Dorsolateral prefrontal cortex (tissue), 120 donors: ENCODE measurements at regions of chr1 and their contacts with region 1.

Region 1: DNA sequence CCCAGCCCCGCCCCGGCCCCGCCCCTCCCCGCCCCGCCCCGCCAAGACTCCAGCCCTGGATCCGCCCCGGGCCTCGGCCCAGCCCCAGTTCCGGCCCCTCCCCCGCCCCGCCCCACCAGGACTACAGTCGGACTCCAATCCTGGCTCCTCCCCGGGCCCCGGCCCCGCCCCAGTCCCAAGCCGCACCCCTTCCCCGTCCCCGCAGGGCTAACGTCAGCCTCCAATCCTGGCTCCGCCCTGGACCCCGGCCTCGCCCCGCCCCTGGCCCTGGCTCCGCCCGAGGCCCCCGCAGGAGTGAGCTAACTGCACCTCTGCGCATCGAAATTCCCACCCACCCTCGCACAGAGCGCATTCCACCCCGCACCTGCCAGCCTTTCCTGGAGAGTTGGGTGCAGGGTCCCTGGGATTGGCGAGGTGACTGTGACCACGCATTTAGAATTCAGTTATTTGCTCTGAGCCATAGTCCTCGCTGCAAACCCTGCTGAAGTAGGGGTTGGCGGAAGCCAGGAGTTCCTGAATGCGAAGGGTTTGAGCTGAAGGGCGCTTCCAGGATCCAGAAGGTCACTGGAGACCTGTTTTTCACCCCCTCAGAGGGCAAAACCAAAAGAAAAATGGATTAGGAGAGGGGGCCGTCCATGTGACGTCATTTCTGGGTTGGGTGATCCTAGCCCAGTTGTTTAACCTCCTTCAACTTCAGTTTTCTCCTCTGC is 588 bp upstream of the IGSF8 start:
- DNase-seq: peak; percentile 96 to 100 (median 98)
- H3K4me3 ChIP-seq: peak overlapping the region; percentile 26 to 97 (median 88)
- H3K27ac ChIP-seq: peak overlapping the region; percentile 86 to 100 (median 99)
- H3K27me3 ChIP-seq: no peaks in the 10 kb centered on the region
- CTCF ChIP-seq: peak in 1 of 56 donors; percentile 9

Region 2: GRCh38 chr1:159960721-159961381 is 138.2 kb before region 1 on chr1:
- intact Hi-C with region 1: no loop called
- DNase-seq: no peak
- H3K4me3 ChIP-seq: no peak overlapping the region
- H3K27ac ChIP-seq: no peak overlapping the region
- H3K27me3 ChIP-seq: peaks cover 0 to 4% (median 0%) of the 10 kb centered on the region in 45 donors
- CTCF ChIP-seq: no peak

Region 3: GRCh38 chr1:160046494-160047110 is 52.4 kb before region 1 on chr1:
- intact Hi-C with region 1: loop called in 1 of 2 experiments (anchors 5 kb)
- DNase-seq: peak; percentile 54 to 96 (median 89)
- H3K4me3 ChIP-seq: peak overlapping the region in 25 of 59 donors; percentile 5 to 42 (median 22)
- H3K27ac ChIP-seq: peak overlapping the region; percentile 8 to 100 (median 90)
- H3K27me3 ChIP-seq: no peaks in the 10 kb centered on the region
- CTCF ChIP-seq: peak; percentile 64 to 95 (median 80)

Region 4: GRCh38 chr1:160161965-160162705 is 63.1 kb after region 1 on chr1:
- intact Hi-C with region 1: loop called in 1 of 2 experiments (anchors 5 kb)
- DNase-seq: peak in 3 of 10 donors; percentile 47 to 61 (median 51)
- H3K4me3 ChIP-seq: no peak overlapping the region
- H3K27ac ChIP-seq: peak overlapping the region in 8 of 59 donors; percentile 7 to 46 (median 28)
- H3K27me3 ChIP-seq: no peaks in the 10 kb centered on the region
- CTCF ChIP-seq: peak in 54 of 56 donors; percentile 13 to 78 (median 52)

Region 5: DNA sequence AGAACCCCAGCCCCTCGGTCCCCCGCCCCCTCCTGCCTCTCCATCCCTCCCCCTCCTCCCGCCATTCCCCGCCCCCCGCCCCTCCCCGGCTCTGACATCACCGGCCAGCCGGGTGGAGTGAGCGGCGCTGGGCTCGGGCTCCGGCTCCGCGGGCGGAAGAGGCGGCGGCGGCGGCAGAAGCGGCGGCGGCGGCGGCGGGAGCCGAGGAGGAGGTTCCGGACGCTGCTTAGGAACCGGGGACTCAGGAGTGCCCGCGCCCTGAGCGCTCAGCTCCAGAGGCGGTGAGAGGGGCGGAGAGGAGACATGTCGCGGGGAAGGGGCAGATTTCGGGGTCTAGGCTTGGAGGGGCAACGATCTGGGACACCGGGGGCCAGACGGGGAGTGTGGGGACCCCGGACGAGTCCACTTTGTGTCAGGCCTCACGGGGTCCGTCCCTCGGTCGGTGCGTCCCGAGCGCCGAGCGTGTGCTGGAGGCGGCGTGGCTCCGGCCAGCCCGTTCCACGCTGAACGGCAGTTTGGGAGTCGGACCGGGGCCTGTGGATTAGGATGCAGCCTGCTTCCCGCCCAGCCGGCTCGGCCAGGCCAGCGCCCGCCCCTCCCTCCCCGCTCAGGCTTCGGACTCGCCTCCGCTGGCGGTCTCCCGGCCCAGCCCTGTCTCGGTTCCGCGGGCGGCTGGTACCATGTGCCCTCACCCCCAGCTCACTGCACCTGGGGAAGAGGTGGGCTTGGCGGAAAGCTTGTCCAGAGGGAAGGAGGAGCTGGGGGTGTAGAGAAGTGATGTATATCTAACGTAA is 106.4 kb after region 1 on chr1 and contains the start of gene PEA15:
- intact Hi-C with region 1: loop called (anchors 1 to 5 kb)
- DNase-seq: peak; percentile 55 to 90 (median 76)
- H3K4me3 ChIP-seq: peak within 1 kb of the TSS; percentile 62 to 99 (median 93)
- H3K27ac ChIP-seq: peak within 1 kb of the TSS; percentile 65 to 99 (median 95)
- H3K27me3 ChIP-seq: no peaks in the 10 kb centered on the region
- CTCF ChIP-seq: peak in 2 of 56 donors; percentile 10 to 21
- total RNA-seq, gene PEA15: 342 to 812 (median 617) TPM

Region 6: DNA sequence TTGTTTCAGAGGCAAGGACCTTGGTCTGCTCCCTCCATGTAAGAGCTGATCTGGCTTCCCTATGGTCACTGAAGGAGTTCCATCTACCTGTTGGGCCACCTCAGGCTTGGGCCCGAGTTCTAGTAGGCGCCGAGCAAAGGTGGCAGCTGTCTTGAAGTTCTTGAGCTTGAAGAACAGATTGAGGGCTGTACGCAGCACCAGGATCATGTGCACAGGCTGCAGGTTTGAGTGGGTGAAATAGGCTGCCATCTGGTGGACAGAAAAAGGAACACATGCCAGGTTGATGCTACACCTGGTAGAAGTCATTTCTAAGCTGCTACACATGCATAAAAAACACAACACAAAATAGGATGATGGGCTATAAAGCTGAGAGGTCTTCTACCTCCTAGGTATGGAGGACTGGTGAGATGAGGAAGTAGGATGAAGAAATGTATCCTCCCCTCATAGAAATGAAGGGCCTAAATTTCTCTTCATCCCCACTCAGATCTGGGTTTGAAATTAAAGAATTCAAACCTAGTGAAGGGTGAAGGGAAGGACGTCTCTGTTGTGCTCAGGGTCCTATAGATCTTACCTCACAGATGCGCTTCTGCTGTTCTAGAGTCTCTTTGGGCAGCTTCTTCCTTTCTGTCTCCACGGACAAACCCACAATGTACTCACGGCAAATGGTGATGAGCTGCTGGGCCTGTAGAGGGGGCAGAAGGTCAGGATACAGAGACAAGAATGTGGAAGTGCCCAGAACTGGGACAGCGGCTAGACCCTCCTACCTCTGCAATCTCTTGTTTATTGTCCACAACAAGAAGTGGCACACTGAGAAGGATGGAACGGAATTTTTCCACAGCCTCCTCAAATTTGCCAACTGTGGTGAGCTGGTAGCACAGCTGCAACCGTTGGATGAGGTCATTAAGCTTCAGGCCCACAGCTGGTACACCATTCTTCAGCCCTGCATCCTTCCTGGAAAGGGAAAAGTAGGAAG is 192.5 kb after region 1 on chr1:
- intact Hi-C with region 1: loop called in 1 of 2 experiments (anchors 1 kb)
- DNase-seq: peak in 9 of 10 donors; percentile 62 to 79 (median 72)
- H3K4me3 ChIP-seq: peak overlapping the region in 2 of 59 donors; percentile 1 to 10
- H3K27ac ChIP-seq: peak overlapping the region; percentile 30 to 93 (median 81)
- H3K27me3 ChIP-seq: no peaks in the 10 kb centered on the region
- CTCF ChIP-seq: peak; percentile 61 to 92 (median 84)